Activated CD4-positive, alpha-beta memory T cell treated with anti-CD3 and anti-CD28 coated beads, Interleukin-2, amount 10 ng/mL, durations not matched to agents 7 days and 5 days (primary cell): ENCODE measurements at regions of chr18 and their contacts with region 1.

Region 1: DNA sequence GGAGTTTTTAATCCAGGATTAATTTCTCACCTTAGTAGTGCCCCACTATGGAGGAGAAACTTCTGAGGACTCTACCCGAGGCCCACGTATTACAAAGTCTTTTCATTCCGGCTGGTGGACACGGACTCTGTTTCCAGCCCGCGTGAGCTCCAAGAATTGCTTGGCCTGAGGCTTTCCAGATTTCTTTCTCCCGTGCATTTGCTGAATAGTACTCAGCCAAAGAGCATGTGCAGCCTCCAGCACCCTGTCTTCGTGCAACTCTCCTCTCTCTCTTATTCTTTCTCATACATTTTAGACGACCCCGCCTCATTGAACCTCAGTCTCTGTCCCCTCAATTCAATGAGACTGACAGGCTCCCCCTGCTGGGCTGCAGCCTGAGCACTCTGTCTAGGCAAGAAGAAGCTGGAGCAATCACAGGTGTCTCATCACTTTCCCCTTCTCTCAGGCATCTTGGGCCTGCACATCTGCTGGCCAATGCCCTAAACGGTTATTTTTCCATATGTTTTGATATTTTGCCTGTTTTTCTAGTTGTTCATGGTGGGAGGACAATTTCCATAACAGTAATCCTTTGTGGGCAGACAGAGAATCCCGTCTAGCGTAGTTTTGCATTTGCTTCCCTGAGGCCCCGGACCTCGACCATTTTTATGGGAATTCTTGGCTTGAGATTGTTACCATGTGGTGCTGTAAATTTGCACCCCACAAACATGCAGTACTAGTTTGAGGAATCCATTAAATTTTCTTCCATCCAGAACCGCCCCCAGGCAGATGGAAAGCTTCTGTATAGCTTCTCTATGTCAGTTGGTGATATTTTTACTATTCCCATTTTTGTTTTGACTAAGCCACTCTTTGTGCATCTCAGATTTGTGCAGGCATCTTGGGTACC is 50.1 kb upstream of the LPIN2 start:
- DNase-seq: peak; percentile 83
- H3K4me3 Mint-ChIP-seq: peak overlapping the region; percentile 70
- H3K27ac Mint-ChIP-seq: peak overlapping the region; percentile 91
- H3K4me1 Mint-ChIP-seq: peaks cover 67% of the 10 kb centered on the region
- H3K27me3 Mint-ChIP-seq: no peaks in the 10 kb centered on the region

Region 2: DNA sequence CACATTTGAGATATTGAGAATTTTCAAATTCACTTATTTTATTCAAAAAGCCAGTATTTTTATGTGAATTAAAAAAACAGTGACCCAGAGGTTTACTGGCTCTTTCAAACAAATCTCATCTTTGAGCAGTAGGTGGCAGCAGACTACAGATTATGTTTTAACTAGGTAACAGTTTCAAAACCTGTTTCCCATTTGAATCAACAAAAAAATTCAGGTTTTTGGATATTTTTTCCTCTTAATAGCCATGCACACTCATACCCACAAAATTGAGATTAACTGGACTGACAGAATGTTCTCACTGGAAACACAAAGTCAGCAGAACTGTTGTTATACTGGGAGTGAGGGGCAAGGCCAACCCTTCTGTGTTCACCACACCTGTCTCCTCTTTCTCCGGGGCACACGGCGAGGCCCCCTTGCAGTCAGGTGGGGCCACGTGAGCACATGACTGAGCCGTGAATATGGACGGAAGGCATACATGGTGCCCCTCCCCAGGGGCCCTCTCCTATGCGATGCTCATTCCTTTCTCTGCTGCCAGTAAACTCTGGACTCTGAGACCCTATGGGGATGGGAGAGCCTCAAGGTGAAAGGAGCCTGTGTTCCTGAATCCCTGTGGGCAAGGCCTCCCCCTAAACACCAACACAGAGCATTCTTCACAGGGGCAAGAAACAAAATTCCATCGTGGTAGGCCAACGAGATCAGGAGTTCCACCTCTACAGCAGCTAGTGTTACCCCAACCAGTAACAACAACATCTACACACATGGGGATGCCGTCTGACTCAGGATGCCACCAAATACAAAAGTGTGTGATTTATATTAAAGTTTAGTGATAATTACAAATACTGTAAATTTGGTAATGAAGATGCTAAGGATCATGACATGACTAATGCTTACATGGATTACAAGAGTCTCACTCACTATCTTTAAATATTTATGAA is 130.5 kb before region 1 on chr18:
- CTCF ChIA-PET with region 1: interaction called, 37 read pairs
- POLR2A ChIA-PET with region 1: interaction called, 4 read pairs
- DNase-seq: peak; percentile 36
- H3K4me3 Mint-ChIP-seq: no peak overlapping the region
- H3K27ac Mint-ChIP-seq: peak overlapping the region; percentile 20
- H3K4me1 Mint-ChIP-seq: peaks cover 28% of the 10 kb centered on the region
- H3K27me3 Mint-ChIP-seq: no peaks in the 10 kb centered on the region

Region 3: DNA sequence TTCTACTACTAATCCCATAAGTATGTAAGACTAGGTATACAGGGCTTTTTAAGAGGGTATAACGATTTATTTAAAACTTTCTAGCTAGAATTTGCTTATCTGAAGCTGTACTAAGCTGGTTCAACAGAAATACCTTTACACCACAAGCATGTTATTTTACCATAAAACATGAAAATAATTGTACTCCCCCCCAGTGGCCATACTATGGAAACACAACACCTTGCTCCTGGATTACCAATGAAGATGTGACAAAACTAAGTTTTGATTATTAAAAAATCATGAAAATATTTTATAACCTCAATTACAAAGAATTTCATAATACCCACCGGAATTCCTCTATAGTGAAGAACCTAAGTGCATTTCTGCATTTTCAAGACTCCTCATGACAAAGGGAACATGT is 77.4 kb before region 1 on chr18:
- CTCF ChIA-PET with region 1: interaction called, 94 read pairs
- POLR2A ChIA-PET with region 1: interaction called, 19 read pairs
- DNase-seq: no peak
- H3K4me3 Mint-ChIP-seq: no peak overlapping the region
- H3K27ac Mint-ChIP-seq: no peak overlapping the region
- H3K4me1 Mint-ChIP-seq: peaks cover 71% of the 10 kb centered on the region
- H3K27me3 Mint-ChIP-seq: no peaks in the 10 kb centered on the region

Region 4: DNA sequence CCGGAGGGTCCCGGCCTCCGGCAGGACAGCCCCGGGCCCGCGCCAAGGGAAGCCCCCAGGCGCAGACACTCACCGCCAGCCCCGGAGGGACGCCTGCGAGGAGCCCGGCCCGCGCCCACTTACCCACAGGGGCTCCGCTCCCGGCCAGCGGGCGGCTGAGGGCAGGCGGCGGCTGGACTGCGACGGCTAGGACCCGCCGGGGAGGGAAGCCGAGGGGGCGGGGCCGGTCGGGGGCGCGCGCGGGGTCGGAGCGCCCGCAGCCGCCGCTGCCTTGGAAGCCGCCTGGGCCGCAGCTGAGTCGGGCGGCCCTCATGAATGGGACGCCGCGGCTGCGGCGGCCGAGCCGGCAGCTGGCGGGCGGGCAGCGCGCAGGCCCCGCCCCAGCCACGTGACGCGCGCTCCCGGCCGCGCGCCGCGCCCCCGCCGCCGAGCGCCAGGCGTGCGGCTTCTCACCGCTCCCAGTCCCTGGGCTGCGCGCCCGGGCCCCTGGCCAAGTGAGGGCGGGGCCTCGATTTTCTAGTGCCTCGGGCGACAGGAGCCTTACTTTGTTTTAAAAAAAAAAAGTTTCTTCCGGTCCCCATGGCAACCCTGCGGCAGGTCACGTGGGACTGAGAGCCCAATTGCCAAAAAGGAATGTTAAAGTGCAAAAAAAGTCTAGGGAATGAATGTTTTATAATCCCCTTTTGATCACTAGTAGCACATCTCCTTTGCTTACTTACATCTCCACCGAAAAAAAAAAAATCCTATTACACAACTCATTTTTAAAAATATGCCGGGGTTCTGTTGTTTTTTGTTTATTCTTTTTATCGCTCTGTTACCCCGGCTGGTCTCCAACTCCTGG is 49.9 kb before region 1 on chr18 and contains the start of gene LPIN2:
- CTCF ChIA-PET with region 1: interaction called, 24 read pairs
- POLR2A ChIA-PET with region 1: interaction called, 79 read pairs
- DNase-seq: peak; percentile 97
- H3K4me3 Mint-ChIP-seq: peak within 1 kb of the TSS; percentile 90
- H3K27ac Mint-ChIP-seq: peak within 1 kb of the TSS; percentile 80
- H3K4me1 Mint-ChIP-seq: peaks cover 64% of the 10 kb centered on the region
- H3K27me3 Mint-ChIP-seq: no peaks in the 10 kb centered on the region
- total RNA-seq, gene LPIN2: 78.4 to 79.6 TPM

Region 5: DNA sequence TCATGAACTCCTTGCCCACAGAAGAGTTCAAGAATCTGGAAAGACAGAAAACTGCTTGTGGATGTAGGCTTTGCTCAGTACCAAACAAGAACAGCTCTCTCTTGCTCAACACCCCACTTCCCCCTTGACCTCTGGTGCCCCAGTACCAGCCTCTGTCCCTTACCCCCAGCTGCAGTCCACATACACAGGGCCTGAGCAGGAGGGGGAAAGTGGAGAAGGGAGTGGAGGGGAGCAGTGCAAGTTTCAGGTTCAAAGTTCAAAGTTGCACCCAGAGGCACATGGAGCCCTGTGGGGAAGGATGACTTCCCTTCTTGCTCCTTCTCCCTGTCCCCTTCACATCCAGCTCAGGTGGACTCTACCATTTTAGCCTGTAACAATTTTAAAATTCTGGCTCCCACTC is 11.0 kb after region 1 on chr18:
- CTCF ChIA-PET with region 1: interaction called, 27 read pairs
- POLR2A ChIA-PET with region 1: interaction called, 3 read pairs
- DNase-seq: no peak
- H3K4me3 Mint-ChIP-seq: no peak overlapping the region
- H3K27ac Mint-ChIP-seq: no peak overlapping the region
- H3K4me1 Mint-ChIP-seq: peaks cover 3% of the 10 kb centered on the region
- H3K27me3 Mint-ChIP-seq: no peaks in the 10 kb centered on the region

Region 6: GRCh38 chr18:3593904-3594661 is 531.0 kb after region 1 on chr18:
- CTCF ChIA-PET with region 1: no interaction called
- POLR2A ChIA-PET with region 1: interaction called, 13 read pairs
- DNase-seq: peak; percentile 91
- H3K4me3 Mint-ChIP-seq: peak overlapping the region; percentile 92
- H3K27ac Mint-ChIP-seq: peak overlapping the region; percentile 98
- H3K4me1 Mint-ChIP-seq: peaks cover 50% of the 10 kb centered on the region
- H3K27me3 Mint-ChIP-seq: no peaks in the 10 kb centered on the region